Activated B cell treated with CpG ODN at 0.5 μM for 24 hours (primary cell): ENCODE measurements at regions of chr2 and their contacts with region 1.

Region 1: DNA sequence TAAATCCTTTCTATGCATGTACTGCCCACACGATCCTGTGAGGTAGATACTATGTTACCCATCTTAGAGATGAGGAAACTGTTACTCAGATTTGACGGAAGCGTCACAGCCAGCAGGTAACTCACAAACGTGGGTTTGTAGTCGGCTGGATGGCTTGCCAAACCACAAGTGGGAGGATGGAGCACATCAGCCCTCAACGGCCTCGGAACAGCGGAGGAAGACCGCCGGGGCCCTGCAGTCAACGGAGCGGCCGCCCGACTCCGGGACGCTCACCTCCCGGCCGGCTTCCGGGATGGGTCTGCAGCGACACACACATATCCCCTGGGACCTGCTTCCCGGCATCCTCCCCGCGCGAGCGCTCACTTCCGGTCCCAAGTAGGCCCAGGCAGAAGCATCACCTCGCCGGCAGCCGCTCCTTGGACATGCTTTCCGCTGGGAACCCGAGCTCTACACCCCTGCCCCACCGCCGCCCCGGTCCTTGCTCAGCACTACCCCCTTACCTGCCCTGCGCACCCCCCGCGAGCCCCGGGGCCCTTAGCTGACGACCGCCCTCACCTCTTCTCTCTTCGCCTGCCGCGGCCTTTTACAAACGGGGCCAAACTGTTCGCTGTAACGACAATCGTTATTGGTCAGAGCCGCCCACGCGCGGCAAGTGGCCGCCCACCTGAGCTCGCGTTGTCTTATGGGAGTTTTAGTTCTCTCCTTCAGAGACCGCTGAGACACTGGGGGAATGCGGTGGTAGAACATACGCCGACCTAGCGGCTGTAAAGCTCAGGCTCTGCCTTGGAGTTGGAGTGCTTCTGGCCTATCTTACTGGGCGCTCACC is at the start of gene C2orf42:
- DNase-seq: peak; percentile 93
- ATAC-seq: peak; percentile 86
- H3K4me3 Mint-ChIP-seq: peak within 1 kb of the TSS; percentile 98
- H3K27ac Mint-ChIP-seq: peak within 1 kb of the TSS; percentile 100
- H3K4me1 Mint-ChIP-seq: peaks cover 17% of the 10 kb centered on the region
- H3K27me3 Mint-ChIP-seq: no peaks in the 10 kb centered on the region
- CTCF ChIP-seq: no peak
- total RNA-seq, gene C2orf42: 28.4 and 34.8 TPM in 2 replicates

Region 2: GRCh38 chr2:69741619-69742466 is 448.8 kb before region 1 on chr2 and contains the start of gene ANXA4:
- CTCF ChIA-PET with region 1: no interaction called
- POLR2A ChIA-PET with region 1: interaction called, 16 read pairs
- intact Hi-C with region 1: no loop called
- DNase-seq: peak; percentile 64
- ATAC-seq: peak; percentile 85
- H3K4me3 Mint-ChIP-seq: peak within 1 kb of the TSS; percentile 95
- H3K27ac Mint-ChIP-seq: peak within 1 kb of the TSS; percentile 89
- H3K4me1 Mint-ChIP-seq: peaks cover 39% of the 10 kb centered on the region
- H3K27me3 Mint-ChIP-seq: no peaks in the 10 kb centered on the region
- CTCF ChIP-seq: no peak
- total RNA-seq, gene ANXA4: 32.0 and 35.4 TPM in 2 replicates

Region 3: GRCh38 chr2:69893684-69894551 is 296.7 kb before region 1 on chr2 and contains the start of gene SNRNP27:
- CTCF ChIA-PET with region 1: no interaction called
- POLR2A ChIA-PET with region 1: interaction called, 16 read pairs
- intact Hi-C with region 1: no loop called
- DNase-seq: peak; percentile 69
- ATAC-seq: peak; percentile 88
- H3K4me3 Mint-ChIP-seq: peak within 1 kb of the TSS; percentile 100
- H3K27ac Mint-ChIP-seq: peak within 1 kb of the TSS; percentile 98
- H3K4me1 Mint-ChIP-seq: peaks cover 43% of the 10 kb centered on the region
- H3K27me3 Mint-ChIP-seq: no peaks in the 10 kb centered on the region
- CTCF ChIP-seq: no peak
- total RNA-seq, gene SNRNP27: 43.0 and 49.1 TPM in 2 replicates

Region 4: DNA sequence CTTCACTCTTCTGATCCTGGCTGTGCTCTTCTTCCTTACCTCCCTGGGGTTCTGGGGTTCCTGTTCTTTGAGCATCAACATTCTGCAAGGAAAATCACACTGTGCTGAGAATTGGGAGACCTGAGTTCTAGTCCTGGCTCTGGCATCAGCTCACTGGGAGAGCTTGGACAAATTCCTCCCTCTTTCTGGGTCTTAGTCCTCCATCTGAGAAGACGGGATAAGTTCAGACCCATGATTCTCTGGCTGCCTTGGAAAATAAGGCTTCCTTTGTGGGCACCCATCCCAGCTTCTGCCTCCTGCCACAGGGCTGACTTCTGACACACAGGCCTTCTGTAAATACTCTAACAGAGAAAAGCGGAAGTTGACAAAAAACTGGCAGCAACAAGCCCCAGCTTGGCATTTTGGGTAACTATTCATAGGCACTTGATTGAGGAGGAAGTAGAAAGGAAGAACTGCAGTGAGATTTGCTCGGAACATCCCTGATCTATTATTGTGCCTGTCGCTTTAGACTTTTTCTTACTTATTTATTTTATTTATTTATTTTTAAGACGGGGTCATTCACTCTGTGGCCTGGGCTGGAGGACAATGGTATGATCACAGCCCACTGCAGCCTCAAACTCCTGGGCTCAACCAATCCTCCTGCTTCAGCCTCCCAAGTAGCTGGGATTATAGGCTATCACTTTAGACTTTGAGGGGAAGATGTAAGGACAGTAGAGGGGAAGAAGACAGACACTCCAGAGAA is 95.5 kb before region 1 on chr2:
- CTCF ChIA-PET with region 1: no interaction called
- POLR2A ChIA-PET with region 1: interaction called, 16 read pairs
- intact Hi-C with region 1: no loop called
- DNase-seq: peak; percentile 36
- ATAC-seq: peak; percentile 95
- H3K4me3 Mint-ChIP-seq: peak overlapping the region; percentile 84
- H3K27ac Mint-ChIP-seq: peak overlapping the region; percentile 97
- H3K4me1 Mint-ChIP-seq: peaks cover 54% of the 10 kb centered on the region
- H3K27me3 Mint-ChIP-seq: no peaks in the 10 kb centered on the region
- CTCF ChIP-seq: no peak

Region 5: DNA sequence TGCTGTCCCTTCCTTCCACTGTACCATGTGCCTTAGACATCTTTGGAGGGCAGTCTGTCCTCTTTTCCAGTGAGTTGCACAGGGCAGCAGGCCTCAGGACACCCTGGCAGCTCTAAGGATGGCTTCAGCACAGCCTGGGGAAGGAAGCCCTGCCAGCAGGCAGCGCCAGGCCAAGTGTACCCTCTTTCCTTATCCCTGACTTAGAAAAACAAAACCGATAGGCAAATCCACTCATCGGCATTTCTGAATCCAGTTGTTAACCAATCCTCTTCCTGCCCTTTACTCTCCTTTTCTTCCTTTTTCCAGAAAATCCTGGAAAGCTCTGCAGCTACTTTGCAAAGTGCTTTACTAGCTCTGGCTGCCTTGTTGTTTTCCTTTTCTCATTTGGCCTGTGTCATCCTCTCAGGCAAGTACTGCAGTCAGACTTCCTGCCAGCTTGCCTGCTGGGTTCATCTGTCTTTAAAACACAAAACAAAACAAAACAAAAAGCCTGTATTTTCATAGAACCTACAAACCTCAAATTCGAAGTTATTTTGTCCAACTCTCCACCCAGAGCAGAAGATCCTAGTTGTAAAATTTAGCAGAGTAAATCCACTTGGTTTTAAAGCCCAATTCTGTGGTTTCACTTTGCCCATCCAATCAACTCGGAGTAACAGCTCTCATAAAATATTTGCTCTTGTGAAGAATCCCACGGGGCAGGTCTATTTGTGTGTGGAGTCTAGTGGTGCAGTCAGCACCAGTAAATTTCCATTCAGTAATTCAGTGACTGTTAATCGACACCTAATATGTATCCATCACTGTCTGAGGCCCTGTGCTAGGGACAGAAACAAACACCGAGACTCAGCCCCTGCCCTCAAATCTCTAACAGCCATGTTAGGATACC is 58.1 kb before region 1 on chr2:
- CTCF ChIA-PET with region 1: no interaction called
- POLR2A ChIA-PET with region 1: interaction called, 23 read pairs
- intact Hi-C with region 1: no loop called
- DNase-seq: no peak
- ATAC-seq: peak; percentile 72
- H3K4me3 Mint-ChIP-seq: peak overlapping the region; percentile 92
- H3K27ac Mint-ChIP-seq: peak overlapping the region; percentile 99
- H3K4me1 Mint-ChIP-seq: peaks cover 72% of the 10 kb centered on the region
- H3K27me3 Mint-ChIP-seq: no peaks in the 10 kb centered on the region
- CTCF ChIP-seq: no peak

Region 6: DNA sequence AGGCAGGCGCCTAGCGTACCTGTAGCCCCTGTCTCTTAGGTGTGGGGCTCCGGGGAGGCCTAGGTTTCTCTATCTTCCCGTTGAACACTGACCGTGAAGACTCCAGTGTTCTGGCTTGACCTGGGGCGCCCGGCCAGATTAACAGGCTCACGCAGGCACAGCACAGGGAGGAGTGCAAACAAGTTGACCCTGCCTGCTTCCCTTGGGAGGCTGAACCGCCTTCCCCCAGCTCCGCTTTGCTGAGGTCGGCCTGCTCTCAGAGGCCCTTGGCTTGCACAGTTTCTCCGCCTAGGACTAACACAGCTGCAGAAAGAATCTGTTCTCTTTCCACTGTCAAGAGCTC is 67.9 kb after region 1 on chr2:
- CTCF ChIA-PET with region 1: no interaction called
- POLR2A ChIA-PET with region 1: interaction called, 37 read pairs
- intact Hi-C with region 1: loop called (anchors 2 kb)
- DNase-seq: no peak
- ATAC-seq: no peak
- H3K4me3 Mint-ChIP-seq: peak overlapping the region; percentile 93
- H3K27ac Mint-ChIP-seq: peak overlapping the region; percentile 12
- H3K4me1 Mint-ChIP-seq: peaks cover 13% of the 10 kb centered on the region
- H3K27me3 Mint-ChIP-seq: no peaks in the 10 kb centered on the region
- CTCF ChIP-seq: no peak

Region 7: DNA sequence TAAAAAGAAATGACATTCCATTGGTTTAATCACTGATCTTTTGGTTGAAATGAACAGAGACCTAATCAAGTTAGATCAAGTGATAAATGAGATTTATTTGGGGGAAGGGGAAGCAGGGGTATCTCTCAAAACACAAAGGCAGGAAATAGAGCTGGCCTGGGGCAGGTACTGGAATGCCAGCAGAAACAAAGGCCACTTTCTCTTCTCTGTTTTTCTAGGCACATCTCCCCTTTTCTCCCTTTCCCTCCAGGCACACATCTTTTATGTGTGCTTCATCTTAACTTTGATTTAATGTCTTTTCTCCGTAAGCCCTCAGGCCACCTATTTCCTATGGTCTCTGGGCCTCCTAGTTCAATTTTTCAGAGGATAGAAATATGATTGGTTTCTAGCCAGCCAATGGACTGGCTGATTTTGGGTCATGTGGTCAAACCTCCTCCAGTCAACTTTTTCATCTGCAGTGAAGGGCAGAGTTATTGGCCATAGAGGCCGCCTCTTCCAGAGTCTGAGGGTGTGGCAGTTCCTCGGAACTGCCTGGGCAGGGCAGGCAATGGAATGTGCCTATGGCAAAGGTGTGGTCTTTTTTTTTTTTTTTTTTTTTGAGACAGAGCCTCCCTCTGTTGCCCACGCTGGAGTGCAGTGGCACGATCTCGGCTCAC is 170.2 kb after region 1 on chr2:
- CTCF ChIA-PET with region 1: no interaction called
- POLR2A ChIA-PET with region 1: no interaction called
- intact Hi-C with region 1: no loop called
- DNase-seq: no peak
- ATAC-seq: no peak
- H3K4me3 Mint-ChIP-seq: no peak overlapping the region
- H3K27ac Mint-ChIP-seq: no peak overlapping the region
- H3K4me1 Mint-ChIP-seq: no peaks in the 10 kb centered on the region
- H3K27me3 Mint-ChIP-seq: peaks cover 22% of the 10 kb centered on the region
- CTCF ChIP-seq: no peak

Region 8: DNA sequence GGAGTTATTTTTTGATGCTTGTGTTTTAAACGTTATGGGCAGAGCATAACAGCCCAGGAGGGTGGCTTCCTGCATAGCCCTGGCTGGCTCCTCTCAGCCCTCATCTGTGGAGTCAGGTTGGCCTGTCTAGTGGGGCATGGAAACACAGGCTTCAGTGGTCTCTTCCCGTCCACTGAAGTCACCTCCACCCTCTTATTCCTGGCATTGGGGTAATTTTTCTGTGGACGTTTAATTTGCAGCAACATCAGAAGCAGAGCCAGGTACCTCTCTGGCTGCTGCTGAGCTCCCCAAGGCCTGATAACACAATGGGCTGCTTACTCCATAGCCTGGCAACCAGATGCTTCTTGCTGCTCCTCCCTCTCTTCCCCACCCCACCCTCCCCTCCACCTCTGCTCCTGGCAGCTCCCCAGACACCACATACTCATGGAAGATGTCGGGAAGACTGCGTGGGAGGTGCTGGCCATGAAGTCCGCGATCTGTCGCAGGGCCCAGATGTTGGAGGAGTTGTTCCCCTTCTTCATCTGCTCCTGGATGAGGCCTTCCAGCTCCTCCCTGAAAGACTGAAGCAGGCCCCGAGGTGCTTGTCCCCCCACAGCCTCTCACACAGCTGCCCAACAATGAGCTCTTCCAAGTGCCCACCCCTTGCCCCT is 513.4 kb after region 1 on chr2:
- CTCF ChIA-PET with region 1: no interaction called
- POLR2A ChIA-PET with region 1: no interaction called
- intact Hi-C with region 1: no loop called
- DNase-seq: no peak
- ATAC-seq: no peak
- H3K4me3 Mint-ChIP-seq: no peak overlapping the region
- H3K27ac Mint-ChIP-seq: no peak overlapping the region
- H3K4me1 Mint-ChIP-seq: no peaks in the 10 kb centered on the region
- H3K27me3 Mint-ChIP-seq: no peaks in the 10 kb centered on the region
- CTCF ChIP-seq: no peak